GM12878 (cell line): ENCODE measurements at regions of chr16 and their contacts with region 1.

Region 1: GRCh38 chr16:56950881-56951771 is 10.6 kb upstream of the CETP start:
- DNase-seq: no peak
- ATAC-seq: peak; percentile 86
- H3K4me3 ChIP-seq: no peak overlapping the region
- H3K27ac ChIP-seq: no peak overlapping the region
- H3K4me1 ChIP-seq: peaks cover 18% of the 10 kb centered on the region
- H3K27me3 ChIP-seq: no peaks in the 10 kb centered on the region
- CTCF ChIP-seq: peak; percentile 71 to 90 (median 89)
- EP300 ChIP-seq: 0 out of 4 replicates have a peak, but pooled peaks of 1 of the 2 experiments have one; percentile 64
- POLR2A ChIP-seq: no peak
- RAD21 ChIP-seq: peak; percentile 83

Region 2: DNA sequence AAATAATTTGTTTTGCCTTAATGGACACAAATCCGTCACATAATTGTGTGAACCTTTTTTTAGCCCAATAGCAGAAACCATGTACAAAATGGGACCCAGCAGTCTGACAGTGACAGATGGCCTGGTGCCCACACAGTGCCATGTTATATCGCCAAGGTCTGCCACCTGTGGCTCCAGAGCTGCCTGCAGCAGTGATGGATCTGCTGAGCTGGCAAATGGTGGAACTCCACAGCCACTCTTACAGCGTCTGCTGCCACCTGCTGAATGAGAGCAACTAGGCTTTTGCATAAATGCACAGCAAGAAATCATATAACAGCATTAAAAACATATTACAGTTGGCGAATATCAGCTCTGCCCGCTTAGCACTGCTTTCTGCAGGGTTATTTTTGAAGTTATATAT is 161.8 kb before region 1 on chr16:
- CTCF ChIA-PET with region 1: interaction called, 27 read pairs
- POLR2A ChIA-PET with region 1: no interaction called
- RAD21 ChIA-PET with region 1: interaction called, 4 read pairs
- SMC1A ChIA-PET with region 1: interaction called, 12 read pairs
- in situ Hi-C with region 1: no loop called
- intact Hi-C with region 1: loop called (anchors 1 kb)
- DNase-seq: no peak
- ATAC-seq: peak; percentile 69
- H3K4me3 ChIP-seq: no peak overlapping the region
- H3K27ac ChIP-seq: no peak overlapping the region
- H3K4me1 ChIP-seq: no peaks in the 10 kb centered on the region
- H3K27me3 ChIP-seq: no peaks in the 10 kb centered on the region
- CTCF ChIP-seq: peak; percentile 28 to 51 (median 31); a peak in 3 of 6 replicates
- EP300 ChIP-seq: no peak
- POLR2A ChIP-seq: no peak
- RAD21 ChIP-seq: peak; percentile 53

Region 3: GRCh38 chr16:56888806-56889205 is 62.3 kb before region 1 on chr16:
- CTCF ChIA-PET with region 1: interaction called, 15 read pairs
- POLR2A ChIA-PET with region 1: no interaction called
- RAD21 ChIA-PET with region 1: interaction called, 5 read pairs
- SMC1A ChIA-PET with region 1: interaction called, 7 read pairs
- in situ Hi-C with region 1: no loop called
- intact Hi-C with region 1: no loop called
- DNase-seq: peak; percentile 61
- ATAC-seq: peak; percentile 94
- H3K4me3 ChIP-seq: no peak overlapping the region
- H3K27ac ChIP-seq: no peak overlapping the region
- H3K4me1 ChIP-seq: peaks cover 8% of the 10 kb centered on the region
- H3K27me3 ChIP-seq: no peaks in the 10 kb centered on the region
- CTCF ChIP-seq: peak in 2 of 3 experiments; percentile 15 to 27; a peak in 2 of 6 replicates
- EP300 ChIP-seq: peak in 1 of 2 experiments; percentile 57; a peak in 1 of 4 replicates
- POLR2A ChIP-seq: no peak
- RAD21 ChIP-seq: 0 out of 2 replicates have a peak, but pooled peaks have one; percentile 37

Region 4: DNA sequence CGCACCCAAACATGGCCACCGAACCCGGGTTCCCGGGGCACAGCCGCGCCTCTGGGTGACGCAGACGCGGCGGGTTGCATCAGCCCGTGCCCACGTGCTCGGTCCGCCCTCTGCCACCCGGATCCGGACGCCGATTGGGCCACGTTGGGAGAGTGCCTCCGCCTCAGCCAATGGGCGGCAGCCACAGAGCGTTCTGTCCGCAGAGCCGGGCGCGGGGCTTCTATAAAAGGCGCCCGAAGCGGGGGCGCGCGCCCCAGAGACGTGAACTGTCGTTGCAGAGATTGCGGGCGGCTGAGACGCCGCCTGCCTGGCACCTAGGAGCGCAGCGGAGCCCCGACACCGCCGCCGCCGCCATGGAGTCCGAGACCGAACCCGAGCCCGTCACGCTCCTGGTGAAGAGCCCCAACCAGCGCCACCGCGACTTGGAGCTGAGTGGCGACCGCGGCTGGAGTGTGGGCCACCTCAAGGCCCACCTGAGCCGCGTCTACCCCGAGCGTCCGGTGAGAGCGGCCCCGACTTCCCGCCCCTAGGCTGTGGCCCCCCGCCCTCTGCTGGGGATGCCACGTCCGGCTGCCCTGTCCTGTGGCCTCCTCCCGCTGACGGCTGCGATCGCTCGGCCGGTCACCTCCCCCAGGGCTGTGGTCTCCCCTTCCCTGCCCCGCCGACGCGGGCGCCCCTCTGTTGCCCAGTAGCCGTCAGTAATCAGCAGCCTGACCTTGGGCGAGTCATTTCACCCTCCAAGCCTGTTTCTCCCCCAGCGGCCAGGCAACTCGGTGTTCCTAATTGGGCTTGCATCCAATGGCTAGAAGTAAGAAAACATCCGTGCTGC is 19.0 kb before region 1 on chr16 and contains the start of gene HERPUD1:
- CTCF ChIA-PET with region 1: interaction called, 6 read pairs
- POLR2A ChIA-PET with region 1: interaction called, 49 read pairs
- RAD21 ChIA-PET with region 1: interaction called, 9 read pairs
- SMC1A ChIA-PET with region 1: interaction called, 17 read pairs
- in situ Hi-C with region 1: no loop called
- intact Hi-C with region 1: no loop called
- DNase-seq: peak; percentile 89
- ATAC-seq: peak; percentile 84
- H3K4me3 ChIP-seq: peak within 1 kb of the TSS; percentile 92
- H3K27ac ChIP-seq: peak within 1 kb of the TSS; percentile 88
- H3K4me1 ChIP-seq: peaks cover 20% of the 10 kb centered on the region
- H3K27me3 ChIP-seq: no peaks in the 10 kb centered on the region
- CTCF ChIP-seq: no peak
- EP300 ChIP-seq: no peak
- POLR2A ChIP-seq: peak; percentile 99
- RAD21 ChIP-seq: no peak
- polyA plus RNA-seq, gene HERPUD1: 32.6 to 68.1 TPM

Region 5: GRCh38 chr16:56970934-56971767 is 20.0 kb after region 1 on chr16:
- CTCF ChIA-PET with region 1: interaction called, 68 read pairs
- POLR2A ChIA-PET with region 1: interaction called, 3 read pairs
- RAD21 ChIA-PET with region 1: interaction called, 6 read pairs
- SMC1A ChIA-PET with region 1: interaction called, 6 read pairs
- in situ Hi-C with region 1: no loop called
- intact Hi-C with region 1: no loop called
- DNase-seq: peak; percentile 80
- ATAC-seq: peak; percentile 85
- H3K4me3 ChIP-seq: no peak overlapping the region
- H3K27ac ChIP-seq: peak overlapping the region; percentile 27; the same call in 1 of the 2 replicates
- H3K4me1 ChIP-seq: peaks cover 46% of the 10 kb centered on the region
- H3K27me3 ChIP-seq: no peaks in the 10 kb centered on the region
- CTCF ChIP-seq: peak in 1 of 3 experiments; percentile 20; a peak in 1 of 6 replicates
- EP300 ChIP-seq: peak; percentile 37 to 70; a peak in 2 of 4 replicates
- POLR2A ChIP-seq: 0 out of 2 replicates have a peak, but pooled peaks have one; percentile 21
- RAD21 ChIP-seq: peak; percentile 29; the same call in 1 of the 2 replicates